ENCODE measurements at regions of chr20 and their contacts with region 1.

Region 1: GRCh38 chr20:42530822-42531448 is 658.8 kb downstream of the PTPRT start:
- DNase-seq: peak; percentile 38 to 54 (median 48)
- ATAC-seq: peak; percentile 60
- H3K4me3 ChIP-seq: no peak overlapping the region
- H3K27ac ChIP-seq: no peak overlapping the region
- H3K4me1 ChIP-seq: no peaks in the 10 kb centered on the region
- H3K27me3 ChIP-seq: peaks cover 0 to 6% of the 10 kb centered on the region in 2 experiments; a peak in 1 of 5 replicates
- CTCF ChIP-seq: peak; percentile 44 to 67 (median 59); a peak in 4 of 6 replicates
- EP300 ChIP-seq: no peak
- POLR2A ChIP-seq: no peak
- RAD21 ChIP-seq: peak; percentile 27 to 46

Region 2: DNA sequence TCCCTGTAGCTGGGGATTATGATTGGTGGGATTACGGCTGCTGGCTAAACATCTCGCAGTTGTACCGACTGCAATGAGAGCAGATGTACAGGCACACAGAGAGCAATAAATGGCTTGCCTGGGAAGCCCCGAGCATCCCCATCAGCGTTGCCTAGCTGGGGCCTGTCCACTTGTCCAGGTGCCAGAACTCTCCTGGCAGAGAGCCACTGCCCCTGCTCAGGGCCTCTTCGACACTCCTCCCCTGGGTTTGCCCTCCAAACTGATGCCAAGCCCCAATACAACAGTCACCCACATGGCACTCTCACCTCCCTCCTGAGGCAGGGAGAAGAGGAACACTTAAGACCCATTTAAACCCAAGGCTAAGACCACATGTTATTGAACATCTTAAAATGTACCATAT is 56.3 kb before region 1 on chr20:
- CTCF ChIA-PET with region 1: no interaction called
- POLR2A ChIA-PET with region 1: no interaction called
- in situ Hi-C with region 1: no loop called
- intact Hi-C with region 1: loop called (anchors 10 kb)
- DNase-seq: no peak
- ATAC-seq: no peak
- H3K4me3 ChIP-seq: no peak overlapping the region
- H3K27ac ChIP-seq: no peak overlapping the region
- H3K4me1 ChIP-seq: no peaks in the 10 kb centered on the region
- H3K27me3 ChIP-seq: peaks cover 0 to 4% of the 10 kb centered on the region in 2 experiments; a peak in 1 of 5 replicates
- CTCF ChIP-seq: no peak
- EP300 ChIP-seq: no peak
- POLR2A ChIP-seq: no peak
- RAD21 ChIP-seq: no peak

Measured in K562 (cell line).